ENCODE measurements at regions of chr17 and their contacts with region 1.

Region 1: DNA sequence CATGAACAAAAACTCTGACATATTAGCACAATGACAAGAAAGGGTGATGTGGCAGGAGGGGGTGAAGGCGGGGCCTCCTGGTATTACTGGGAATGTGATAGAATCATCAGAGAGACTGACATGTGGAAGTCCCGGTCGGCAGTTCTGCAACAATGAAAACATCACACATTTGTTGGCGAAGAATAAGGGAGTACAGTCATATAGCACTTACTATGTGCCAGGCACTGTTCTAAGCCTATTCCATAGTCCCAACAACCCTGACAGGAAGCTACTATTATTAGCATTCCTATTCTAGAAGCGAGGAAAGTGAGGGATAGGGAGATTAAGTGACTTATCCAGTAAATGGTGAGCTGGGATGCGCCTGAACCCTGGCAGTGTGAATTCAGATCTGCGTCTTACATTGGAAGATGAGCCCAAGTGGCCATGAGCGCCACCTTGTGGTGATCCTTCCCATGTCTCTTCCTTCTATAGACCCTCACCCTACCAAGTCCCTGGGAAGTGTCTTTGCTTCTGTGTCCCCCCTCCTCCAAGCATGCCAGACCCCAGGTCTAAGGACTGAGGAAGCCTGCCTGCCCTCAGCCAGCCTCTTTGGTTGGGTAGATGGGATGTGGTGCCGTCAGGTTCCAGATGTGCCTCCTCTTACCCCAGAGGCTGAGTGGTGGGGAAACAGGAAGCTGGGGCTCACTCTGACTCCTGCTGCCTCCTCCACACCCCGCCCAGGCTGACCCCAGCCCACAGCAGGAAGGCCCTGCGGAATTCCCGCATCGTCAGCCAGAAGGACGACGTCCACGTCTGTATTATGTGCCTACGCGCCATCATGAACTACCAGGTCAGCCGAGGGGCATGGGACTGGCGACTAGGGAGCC is 14.0 kb downstream of the FMNL1 start:
- DNase-seq: peak; percentile 70 to 92 (median 78)
- ATAC-seq: peak; percentile 63
- H3K4me3 ChIP-seq: no peak overlapping the region
- H3K4me3 Mint-ChIP-seq: peak overlapping the region; percentile 39
- H3K27ac ChIP-seq: peak overlapping the region; percentile 41 to 44
- H3K27ac Mint-ChIP-seq: peak overlapping the region; percentile 100
- H3K4me1 ChIP-seq: peaks cover 76% of the 10 kb centered on the region
- H3K4me1 Mint-ChIP-seq: peaks cover 65% of the 10 kb centered on the region
- H3K27me3 ChIP-seq: no peaks in the 10 kb centered on the region
- H3K27me3 Mint-ChIP-seq: no peaks in the 10 kb centered on the region
- CTCF ChIP-seq: peak; percentile 93

Region 2: GRCh38 chr17:45261577-45262515 is 26.2 kb after region 1 on chr17 and contains the start of gene SPATA32:
- CTCF ChIA-PET with region 1: interaction called, 6 read pairs
- POLR2A ChIA-PET with region 1: interaction called, 3 read pairs
- intact Hi-C with region 1: loop called in 1 of 2 experiments (anchors 1 kb)
- DNase-seq: peak; percentile 38 to 80 (median 66)
- ATAC-seq: peak; percentile 88
- H3K4me3 ChIP-seq: peak within 1 kb of the TSS; percentile 75
- H3K4me3 Mint-ChIP-seq: peak within 1 kb of the TSS; percentile 89
- H3K27ac ChIP-seq: peak within 1 kb of the TSS; percentile 65
- H3K27ac Mint-ChIP-seq: peak within 1 kb of the TSS; percentile 84
- H3K4me1 ChIP-seq: peaks cover 37% of the 10 kb centered on the region
- H3K4me1 Mint-ChIP-seq: peaks cover 40% of the 10 kb centered on the region
- H3K27me3 ChIP-seq: no peaks in the 10 kb centered on the region
- H3K27me3 Mint-ChIP-seq: no peaks in the 10 kb centered on the region
- CTCF ChIP-seq: no peak
- total RNA-seq, gene SPATA32: 0.20 to 0.27 TPM

Region 3: GRCh38 chr17:45270828-45271418 is 35.3 kb after region 1 on chr17:
- CTCF ChIA-PET with region 1: interaction called, 8 read pairs
- POLR2A ChIA-PET with region 1: no interaction called
- intact Hi-C with region 1: loop called in 1 of 2 experiments (anchors 2 kb)
- DNase-seq: peak; percentile 27 to 74 (median 51)
- ATAC-seq: peak; percentile 85
- H3K4me3 ChIP-seq: no peak overlapping the region
- H3K4me3 Mint-ChIP-seq: no peak overlapping the region
- H3K27ac ChIP-seq: no peak overlapping the region
- H3K27ac Mint-ChIP-seq: no peak overlapping the region
- H3K4me1 ChIP-seq: peaks cover 6% of the 10 kb centered on the region
- H3K4me1 Mint-ChIP-seq: no peaks in the 10 kb centered on the region
- H3K27me3 ChIP-seq: no peaks in the 10 kb centered on the region
- H3K27me3 Mint-ChIP-seq: no peaks in the 10 kb centered on the region
- CTCF ChIP-seq: peak; percentile 71

Region 4: GRCh38 chr17:45385331-45385997 is 149.8 kb after region 1 on chr17:
- CTCF ChIA-PET with region 1: interaction called, 6 read pairs
- POLR2A ChIA-PET with region 1: interaction called, 3 read pairs
- intact Hi-C with region 1: loop called in 1 of 2 experiments (anchors 1 kb)
- DNase-seq: peak; percentile 77 to 97 (median 88)
- ATAC-seq: peak; percentile 97
- H3K4me3 ChIP-seq: no peak overlapping the region
- H3K4me3 Mint-ChIP-seq: no peak overlapping the region
- H3K27ac ChIP-seq: no peak overlapping the region
- H3K27ac Mint-ChIP-seq: no peak overlapping the region
- H3K4me1 ChIP-seq: peaks cover 10% of the 10 kb centered on the region
- H3K4me1 Mint-ChIP-seq: peaks cover 4% of the 10 kb centered on the region
- H3K27me3 ChIP-seq: no peaks in the 10 kb centered on the region
- H3K27me3 Mint-ChIP-seq: peaks cover 12% of the 10 kb centered on the region
- CTCF ChIP-seq: peak; percentile 95

Measured in CD4-positive, alpha-beta T cell (primary cell).